Stomach (tissue), 19 donors: ENCODE measurements at regions of chr10 and their contacts with region 1.

Region 1: DNA sequence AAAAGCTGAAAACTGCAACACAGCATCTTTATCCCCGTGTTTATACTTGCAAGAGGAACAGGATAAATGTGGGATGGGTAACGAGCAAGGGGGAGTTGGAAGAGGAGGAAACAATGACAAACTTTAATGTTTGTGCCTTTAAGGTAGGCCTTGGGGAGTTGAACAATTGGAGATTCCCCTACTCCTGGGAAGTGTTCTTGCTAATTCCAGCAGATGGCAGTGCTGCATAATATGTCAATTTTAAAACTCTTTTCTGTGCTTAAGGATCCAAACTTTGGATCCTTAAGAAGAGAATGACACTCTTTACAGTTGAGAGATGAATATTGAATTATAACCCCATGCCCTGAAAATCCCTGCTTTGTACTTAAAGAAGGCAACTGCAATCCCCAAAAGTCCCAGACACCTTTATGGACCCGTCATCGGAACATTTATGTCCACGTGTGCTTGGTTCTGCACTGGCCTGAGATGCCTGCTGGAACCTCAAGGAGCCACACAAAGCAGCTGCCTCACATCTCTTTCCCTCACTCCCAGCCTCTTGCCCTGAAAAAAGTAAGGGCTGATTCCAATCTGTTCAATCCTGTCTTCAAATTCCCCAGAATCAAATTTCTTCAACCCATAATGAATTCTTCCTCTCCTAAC is 12.0 kb downstream of the IFIT5 start:
- DNase-seq: peak in 1 of 2 donors; percentile 81
- H3K4me3 ChIP-seq: no peak overlapping the region
- H3K27ac ChIP-seq: no peak overlapping the region
- H3K4me1 ChIP-seq: no peaks in the 10 kb centered on the region
- H3K27me3 ChIP-seq: no peaks in the 10 kb centered on the region
- CTCF ChIP-seq: peak in 5 of 7 experiments; percentile 77 to 83 (median 82)
- EP300 ChIP-seq: no peak
- POLR2A ChIP-seq: no peak

Region 2: DNA sequence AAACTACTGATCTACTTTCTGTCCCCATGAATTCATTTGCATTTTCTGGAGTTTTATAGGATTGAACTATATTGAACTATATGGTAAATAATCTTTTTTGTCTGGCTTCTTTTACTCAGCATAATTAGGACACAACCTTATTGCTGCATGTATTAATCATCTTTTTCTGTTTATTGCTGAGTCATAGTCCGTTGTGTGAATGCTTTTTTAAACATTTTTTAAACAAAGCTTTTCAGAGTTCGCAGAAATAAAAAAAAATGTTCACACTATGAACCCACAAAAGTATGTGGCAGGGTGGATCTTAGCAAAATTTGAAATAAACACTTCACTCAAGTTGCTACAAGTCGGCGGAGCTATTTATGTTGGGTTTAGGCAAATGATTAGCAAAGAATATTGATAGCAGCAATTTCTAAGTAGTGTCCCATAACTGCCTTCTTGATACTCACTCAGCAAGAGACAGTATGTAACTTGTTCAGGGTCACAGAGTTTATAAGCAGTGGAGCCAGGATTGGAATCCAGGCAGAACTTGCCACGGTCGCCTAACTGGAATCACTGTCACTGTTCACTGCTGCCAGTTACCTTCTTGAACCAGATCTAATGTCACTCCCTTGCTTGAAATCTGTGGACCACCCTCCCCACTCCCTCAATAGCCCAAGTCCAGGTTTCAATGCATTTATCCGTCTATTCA is 224.9 kb before region 1 on chr10:
- intact Hi-C with region 1: no loop called
- DNase-seq: no peak
- H3K4me3 ChIP-seq: no peak overlapping the region
- H3K27ac ChIP-seq: no peak overlapping the region
- H3K4me1 ChIP-seq: peaks cover 1 to 6% (median 3%) of the 10 kb centered on the region in 4 donors
- H3K27me3 ChIP-seq: peaks cover 0 to 39% (median 8%) of the 10 kb centered on the region in 3 donors
- CTCF ChIP-seq: no peak
- EP300 ChIP-seq: no peak
- POLR2A ChIP-seq: no peak

Region 3: GRCh38 chr10:89563861-89564478 is 137.6 kb after region 1 on chr10:
- intact Hi-C with region 1: loop called (anchors 5 kb)
- DNase-seq: peak in 1 of 2 donors; percentile 77
- H3K4me3 ChIP-seq: no peak overlapping the region
- H3K27ac ChIP-seq: no peak overlapping the region
- H3K4me1 ChIP-seq: peaks cover 0 to 4% (median 0%) of the 10 kb centered on the region in 4 donors
- H3K27me3 ChIP-seq: no peaks in the 10 kb centered on the region
- CTCF ChIP-seq: peak in 5 of 7 experiments; percentile 68 to 84 (median 71)
- EP300 ChIP-seq: no peak
- POLR2A ChIP-seq: no peak

Region 4: DNA sequence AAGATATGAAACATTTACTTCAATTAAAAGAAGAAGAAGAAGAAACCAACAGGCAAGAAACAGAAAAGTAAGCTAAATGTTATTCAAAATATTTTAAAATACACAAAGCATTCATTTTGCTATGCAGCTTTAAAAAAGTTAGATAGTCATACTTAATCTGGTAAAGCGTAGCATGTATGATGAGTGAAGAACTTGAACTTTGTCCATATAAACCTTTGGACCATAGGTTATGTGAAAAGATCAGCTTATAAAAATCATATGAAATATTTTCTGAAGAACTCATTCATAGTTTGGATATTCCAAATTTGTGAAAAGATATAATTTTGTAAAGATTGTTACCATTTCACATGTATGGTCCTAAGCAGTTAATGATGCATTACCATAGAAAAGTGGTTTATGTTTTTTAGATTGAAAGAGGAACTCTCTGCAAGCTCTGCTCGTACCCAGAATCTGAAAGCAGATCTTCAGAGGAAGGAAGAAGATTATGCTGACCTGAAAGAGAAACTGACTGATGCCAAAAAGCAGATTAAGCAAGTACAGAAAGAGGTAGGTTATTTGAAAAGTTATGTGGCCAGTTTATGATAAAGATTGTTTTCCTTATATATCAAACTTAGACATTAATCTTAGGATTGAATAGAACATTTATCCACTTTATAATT is 312.3 kb after region 1 on chr10:
- intact Hi-C with region 1: no loop called
- DNase-seq: peak in 1 of 2 donors; percentile 7
- H3K4me3 ChIP-seq: no peak overlapping the region
- H3K27ac ChIP-seq: no peak overlapping the region
- H3K4me1 ChIP-seq: no peaks in the 10 kb centered on the region
- H3K27me3 ChIP-seq: no peaks in the 10 kb centered on the region
- CTCF ChIP-seq: no peak
- EP300 ChIP-seq: no peak
- POLR2A ChIP-seq: no peak